GM10248 (cell line): ENCODE measurements at regions of chr17 and their contacts with region 1.

Region 1: GRCh38 chr17:409848-410545 is 57.4 kb upstream of the RPH3AL start:
- DNase-seq: peak; percentile 98
- CTCF ChIP-seq: no peak

Region 2: DNA sequence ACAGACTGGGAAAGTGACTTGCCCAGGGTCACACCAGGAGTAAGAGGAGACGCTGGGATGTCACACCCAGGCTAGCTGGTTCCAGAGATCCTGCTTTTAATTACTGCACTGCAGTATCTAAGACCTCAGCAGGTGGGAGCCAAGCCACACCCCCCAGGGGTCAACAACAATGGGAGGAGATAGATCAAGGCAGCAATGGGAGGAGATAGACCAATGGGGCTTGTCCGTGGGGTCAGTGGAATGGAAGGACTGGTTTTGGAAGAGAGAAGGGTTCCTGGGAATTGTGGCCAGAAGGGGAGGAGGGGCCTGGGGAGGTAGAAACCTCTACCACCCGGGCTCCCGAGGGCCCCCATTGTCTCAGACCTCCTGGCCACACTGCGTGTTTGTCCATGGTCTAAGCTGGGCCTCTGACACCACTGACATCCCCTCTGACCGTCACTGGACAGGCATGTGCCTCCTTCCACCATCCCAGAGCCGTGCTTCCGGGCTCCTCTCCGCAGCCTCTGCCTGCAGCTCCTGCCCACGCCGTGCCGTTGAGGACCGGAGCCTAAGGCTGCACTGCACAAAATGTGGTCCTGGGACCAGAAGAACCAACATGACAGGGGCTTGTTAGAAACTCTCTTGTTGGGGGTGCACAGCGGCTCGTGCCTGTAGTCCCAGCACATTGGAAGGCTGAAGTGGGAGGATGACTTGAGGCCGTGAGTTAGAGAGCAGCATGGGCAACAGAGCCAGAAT is 12.4 kb after region 1 on chr17:
- CTCF ChIA-PET with region 1: interaction called, 25 read pairs
- POLR2A ChIA-PET with region 1: no interaction called
- DNase-seq: no peak
- CTCF ChIP-seq: no peak

Region 3: GRCh38 chr17:688100-688989 is 278.3 kb after region 1 on chr17:
- CTCF ChIA-PET with region 1: interaction called, 10 read pairs
- POLR2A ChIA-PET with region 1: no interaction called
- DNase-seq: no peak
- CTCF ChIP-seq: no peak

Region 4: GRCh38 chr17:700504-701094 is 290.6 kb after region 1 on chr17:
- CTCF ChIA-PET with region 1: interaction called, 167 read pairs
- POLR2A ChIA-PET with region 1: no interaction called
- DNase-seq: peak; percentile 74
- CTCF ChIP-seq: peak; percentile 50

Region 5: GRCh38 chr17:705863-706262 is 295.9 kb after region 1 on chr17:
- CTCF ChIA-PET with region 1: interaction called, 167 read pairs
- POLR2A ChIA-PET with region 1: no interaction called
- DNase-seq: no peak
- CTCF ChIP-seq: no peak

Region 6: GRCh38 chr17:979538-980405 is 569.8 kb after region 1 on chr17 and contains the start of gene NXN:
- CTCF ChIA-PET with region 1: interaction called, 17 read pairs
- POLR2A ChIA-PET with region 1: no interaction called
- DNase-seq: peak; percentile 98
- CTCF ChIP-seq: no peak

Region 7: GRCh38 chr17:996554-997344 is 586.8 kb after region 1 on chr17 and contains the start of gene TIMM22:
- CTCF ChIA-PET with region 1: interaction called, 12 read pairs
- POLR2A ChIA-PET with region 1: no interaction called
- DNase-seq: peak; percentile 96
- CTCF ChIP-seq: peak; percentile 92